Calu3 (cell line): ENCODE measurements at regions of chrX and their contacts with region 1.

Region 1: DNA sequence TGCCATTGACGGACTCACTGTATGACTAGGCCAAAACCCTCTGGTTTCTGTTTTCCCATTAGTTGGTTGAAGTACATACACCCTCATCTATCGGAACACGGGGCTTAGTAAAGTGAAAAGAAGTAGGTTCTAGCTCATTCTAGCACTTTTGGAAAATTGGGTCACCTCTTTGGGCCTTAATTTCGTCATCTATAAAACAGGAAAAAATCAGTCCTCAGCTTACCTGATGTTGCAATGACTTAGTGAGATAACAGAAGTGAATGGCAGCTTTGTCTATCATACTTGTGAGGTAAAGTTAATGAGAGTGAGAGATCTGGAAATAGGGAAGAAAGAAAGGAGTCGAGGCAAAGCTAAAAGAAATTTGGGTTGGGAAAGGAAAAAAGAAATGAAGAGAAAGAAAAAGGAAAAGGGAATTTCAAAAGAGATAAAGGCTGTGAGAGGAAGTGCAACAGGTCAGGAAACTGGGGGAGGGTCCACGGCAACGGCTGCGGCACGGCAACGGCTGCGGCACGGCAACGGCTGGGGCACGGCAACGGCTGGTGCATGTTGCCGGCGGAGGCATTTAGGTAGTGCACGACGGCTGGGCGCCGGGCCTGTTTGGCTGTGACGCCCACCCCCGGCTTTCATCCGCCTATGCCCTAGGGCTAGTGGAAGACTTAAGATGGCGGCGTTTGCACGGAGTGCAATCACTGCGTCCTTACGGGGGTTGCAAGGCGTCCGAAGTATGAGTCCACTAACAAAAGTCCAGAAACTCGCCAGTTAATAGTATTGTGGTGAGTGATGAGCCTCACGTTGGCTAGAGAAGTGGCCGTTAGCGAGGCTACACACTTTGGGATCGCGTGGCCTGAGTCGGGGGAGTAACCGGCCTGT is 360.1 kb upstream of the ZCCHC13 start:
- DNase-seq: peak; percentile 88
- H3K4me3 Mint-ChIP-seq: peak overlapping the region; percentile 69
- H3K27ac Mint-ChIP-seq: peak overlapping the region; percentile 88
- H3K4me1 Mint-ChIP-seq: no peaks in the 10 kb centered on the region
- H3K27me3 Mint-ChIP-seq: no peaks in the 10 kb centered on the region
- CTCF ChIP-seq: no peak

Region 2: DNA sequence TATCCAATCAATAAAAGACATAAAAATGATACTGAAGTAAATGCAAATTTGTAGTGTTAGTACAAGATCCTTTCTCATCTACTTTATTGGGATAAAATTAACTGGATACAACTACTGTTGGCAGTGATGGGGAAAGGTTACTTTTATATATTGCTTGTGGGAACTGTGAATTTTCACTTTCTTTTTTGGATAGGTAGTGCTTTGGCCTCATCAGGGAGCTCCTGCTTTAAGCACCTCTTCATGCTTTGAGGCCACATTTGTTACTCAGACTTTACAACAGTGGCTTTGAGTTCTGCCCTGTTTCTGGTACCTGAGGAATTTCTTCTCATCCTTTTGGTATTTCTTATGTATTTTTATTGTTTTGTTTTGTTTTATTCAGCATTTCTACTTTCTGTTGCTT is 43.2 kb after region 1 on chrX:
- CTCF ChIA-PET with region 1: interaction called, 10 read pairs
- intact Hi-C with region 1: no loop called
- DNase-seq: no peak
- H3K4me3 Mint-ChIP-seq: no peak overlapping the region
- H3K27ac Mint-ChIP-seq: no peak overlapping the region
- H3K4me1 Mint-ChIP-seq: no peaks in the 10 kb centered on the region
- H3K27me3 Mint-ChIP-seq: no peaks in the 10 kb centered on the region
- CTCF ChIP-seq: no peak